Common myeloid progenitor, CD34-positive (primary cell): ENCODE measurements at regions of chr7 and their contacts with region 1.

Region 1: DNA sequence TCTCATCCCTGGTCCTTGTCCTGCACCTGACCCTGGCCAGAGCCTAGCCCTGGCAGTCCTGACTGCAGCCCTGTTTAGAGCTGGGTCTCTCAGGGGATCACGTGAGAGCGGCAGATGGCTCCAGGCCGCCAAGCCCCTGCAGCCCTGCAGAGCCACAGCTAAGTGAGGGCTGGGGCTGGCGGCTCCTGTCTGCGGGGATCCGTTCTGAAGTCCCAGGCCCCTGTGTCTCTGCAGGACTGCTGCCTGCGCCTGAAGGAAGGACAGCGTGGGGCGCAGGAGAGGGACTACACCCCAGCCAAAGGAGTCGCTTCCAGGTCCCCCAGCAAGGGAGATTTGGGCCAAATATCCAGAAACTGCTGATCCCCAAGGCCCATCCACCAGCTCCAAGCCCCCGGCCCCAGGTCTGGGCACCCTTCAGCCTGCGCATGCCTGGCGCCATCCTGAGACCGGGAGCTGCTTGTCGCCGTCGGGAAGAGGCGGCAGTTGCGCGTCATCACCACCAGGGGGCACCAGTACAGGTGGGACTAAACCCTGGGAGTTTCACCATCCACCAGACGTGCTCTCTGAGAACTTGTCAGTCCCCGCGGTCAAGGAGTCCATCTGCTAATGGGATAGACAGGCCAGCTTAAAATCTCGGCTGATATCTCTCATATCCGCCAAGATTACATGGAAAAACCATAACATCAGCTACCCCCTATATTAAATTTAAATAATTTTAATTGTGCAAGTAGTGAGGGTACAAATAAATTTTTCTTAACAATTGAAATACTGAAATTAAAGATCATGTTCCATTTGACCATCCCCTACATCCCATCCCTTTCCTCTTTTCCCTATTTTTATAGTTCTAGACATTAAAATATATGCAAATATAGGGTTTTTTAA is 25.1 kb upstream of the GHRHR start:
- DNase-seq: peak; percentile 30 to 51 (median 38)
- H3K4me3 ChIP-seq: peak overlapping the region in 1 of 7 experiments; percentile 1
- H3K27ac ChIP-seq: no peak overlapping the region
- H3K4me1 ChIP-seq: peaks cover 0 to 3% (median 0%) of the 10 kb centered on the region in 4 experiments
- H3K27me3 ChIP-seq: peaks cover 7 to 29% (median 19%) of the 10 kb centered on the region in 5 experiments

Region 2: DNA sequence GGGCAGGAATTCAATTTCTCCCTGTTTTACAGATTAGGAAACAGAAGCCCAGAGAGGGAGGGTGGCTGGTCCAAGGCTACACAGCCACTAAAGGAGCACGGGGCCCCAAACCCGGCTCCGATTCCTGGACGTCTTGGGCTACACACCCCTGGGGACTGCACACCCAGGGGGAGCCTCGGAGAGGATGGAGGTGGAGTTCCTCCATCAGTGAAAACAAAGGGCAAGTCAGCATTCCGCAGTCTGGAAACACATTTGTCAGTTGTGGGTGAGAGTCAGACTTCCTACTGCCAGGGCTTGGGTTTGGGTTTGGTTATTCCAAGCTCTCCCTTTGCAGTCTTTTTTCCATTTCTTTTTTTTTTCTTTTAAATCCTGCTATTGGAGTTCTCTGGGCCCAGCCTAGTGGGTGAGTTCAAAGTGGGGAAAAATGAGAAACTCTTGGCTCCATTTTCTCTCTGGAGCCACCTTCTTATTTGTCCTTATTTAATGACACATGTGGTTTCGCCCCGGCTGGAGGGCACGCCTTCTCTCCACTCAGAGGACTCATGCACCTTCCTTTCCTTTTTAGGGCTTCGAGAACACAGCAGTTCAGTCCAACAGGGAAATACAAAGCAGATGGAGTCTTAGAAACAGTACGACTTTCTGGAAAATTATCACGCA is 86.9 kb before region 1 on chr7:
- CTCF ChIA-PET with region 1: no interaction called
- POLR2A ChIA-PET with region 1: no interaction called
- DNase-seq: no peak
- H3K4me3 ChIP-seq: no peak overlapping the region
- H3K27ac ChIP-seq: no peak overlapping the region
- H3K4me1 ChIP-seq: no peaks in the 10 kb centered on the region
- H3K27me3 ChIP-seq: no peaks in the 10 kb centered on the region

Region 3: DNA sequence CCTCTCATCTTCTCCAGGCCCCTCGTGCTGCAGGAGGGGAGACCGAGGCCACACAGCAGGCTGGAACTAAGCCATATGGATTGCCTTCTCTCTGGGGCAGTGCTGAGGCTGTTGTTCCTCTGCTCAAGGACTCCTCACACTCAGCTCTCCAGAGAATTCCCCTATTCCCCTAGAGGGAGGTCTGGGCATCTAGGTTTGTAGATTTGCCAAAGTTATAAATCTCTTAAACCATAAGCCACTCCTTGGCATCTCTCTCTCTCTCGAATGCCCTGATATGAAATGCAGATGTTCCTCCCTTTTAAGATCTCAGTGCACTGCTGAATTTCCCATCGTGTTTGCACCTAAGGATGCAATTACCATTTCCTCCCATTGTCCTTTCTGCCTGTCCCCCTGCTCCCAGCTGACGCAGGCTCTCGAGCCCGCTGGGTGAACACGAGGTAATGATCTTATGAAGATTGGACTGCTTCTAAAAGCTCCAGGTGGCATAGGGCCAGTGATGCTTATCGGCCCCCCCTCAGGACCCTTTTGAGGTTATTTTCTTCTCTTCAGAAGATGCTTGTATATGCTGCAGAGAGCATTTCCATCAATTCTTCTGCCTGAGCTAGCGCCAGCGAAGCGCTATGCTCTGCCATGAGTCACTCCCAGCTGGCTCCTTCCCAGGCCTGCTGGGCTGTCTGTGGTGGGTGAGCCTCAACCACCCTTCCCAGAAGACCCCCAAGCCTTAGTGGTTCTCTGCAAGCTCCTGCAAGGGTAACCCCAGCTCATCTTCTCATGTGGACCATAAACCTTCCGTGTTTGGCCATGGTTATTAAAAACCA is 68.7 kb before region 1 on chr7:
- CTCF ChIA-PET with region 1: no interaction called
- POLR2A ChIA-PET with region 1: no interaction called
- DNase-seq: no peak
- H3K4me3 ChIP-seq: no peak overlapping the region
- H3K27ac ChIP-seq: no peak overlapping the region
- H3K4me1 ChIP-seq: no peaks in the 10 kb centered on the region
- H3K27me3 ChIP-seq: no peaks in the 10 kb centered on the region

Region 4: GRCh38 chr7:30893357-30893756 is 45.3 kb before region 1 on chr7:
- CTCF ChIA-PET with region 1: no interaction called
- POLR2A ChIA-PET with region 1: no interaction called
- DNase-seq: no peak
- H3K4me3 ChIP-seq: no peak overlapping the region
- H3K27ac ChIP-seq: no peak overlapping the region
- H3K4me1 ChIP-seq: no peaks in the 10 kb centered on the region
- H3K27me3 ChIP-seq: no peaks in the 10 kb centered on the region

Region 5: GRCh38 chr7:30977896-30978564 is 39.4 kb after region 1 on chr7:
- CTCF ChIA-PET with region 1: interaction called, 15 read pairs
- POLR2A ChIA-PET with region 1: no interaction called
- DNase-seq: peak; percentile 32 to 50 (median 40)
- H3K4me3 ChIP-seq: no peak overlapping the region
- H3K27ac ChIP-seq: no peak overlapping the region
- H3K4me1 ChIP-seq: peaks cover 0 to 8% (median 2%) of the 10 kb centered on the region in 4 experiments
- H3K27me3 ChIP-seq: peaks cover 0 to 17% (median 6%) of the 10 kb centered on the region in 5 experiments

Region 6: GRCh38 chr7:31517513-31517912 is 578.8 kb after region 1 on chr7:
- CTCF ChIA-PET with region 1: no interaction called
- POLR2A ChIA-PET with region 1: no interaction called
- DNase-seq: no peak
- H3K4me3 ChIP-seq: no peak overlapping the region
- H3K27ac ChIP-seq: no peak overlapping the region
- H3K4me1 ChIP-seq: no peaks in the 10 kb centered on the region
- H3K27me3 ChIP-seq: no peaks in the 10 kb centered on the region